ENCODE measurements at regions of chr3 and their contacts with region 1.

Region 1: DNA sequence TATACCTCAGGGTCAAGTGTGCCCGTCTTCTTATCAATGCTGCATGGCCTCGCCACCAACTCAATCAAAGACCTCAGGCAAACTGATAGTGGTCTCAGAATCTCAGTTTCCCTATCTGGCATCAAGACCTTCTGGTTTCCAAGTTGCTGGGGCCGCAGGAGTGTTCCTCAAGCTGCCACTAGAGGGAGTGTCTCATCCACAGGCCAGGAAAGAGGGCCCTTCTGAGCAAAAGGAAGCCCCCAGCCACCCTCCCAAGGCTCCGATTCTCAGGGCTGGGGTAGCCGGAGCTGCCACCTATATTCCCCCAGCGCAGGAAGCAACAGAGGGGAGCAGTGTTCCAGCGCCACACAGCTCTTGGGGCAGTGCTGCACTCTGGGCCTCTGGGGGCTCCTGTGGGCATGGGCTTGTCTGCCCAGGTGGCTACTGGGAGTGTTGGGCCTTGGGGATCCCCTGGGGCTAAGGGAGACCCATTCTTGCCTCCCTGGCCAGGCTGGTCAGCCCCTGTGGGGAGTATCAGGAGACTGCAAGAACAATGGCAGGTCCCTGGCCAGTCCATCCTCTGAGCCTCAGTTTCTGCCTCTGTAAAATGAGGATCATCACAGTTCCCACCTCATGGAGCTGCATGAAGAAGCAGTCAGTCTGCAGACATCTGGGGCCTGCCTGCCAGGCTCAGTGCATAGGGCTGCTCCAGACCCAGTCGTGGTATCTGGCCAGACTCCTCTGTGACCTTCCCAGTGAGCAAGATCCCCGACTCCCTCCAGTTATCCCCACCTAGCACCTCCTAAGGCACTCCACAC is 23.4 kb upstream of the SEC13 start:
- DNase-seq: peak; percentile 74
- H3K4me3 Mint-ChIP-seq: no peak overlapping the region
- H3K27ac Mint-ChIP-seq: no peak overlapping the region
- H3K4me1 Mint-ChIP-seq: no peaks in the 10 kb centered on the region
- H3K27me3 Mint-ChIP-seq: no peaks in the 10 kb centered on the region

Region 2: DNA sequence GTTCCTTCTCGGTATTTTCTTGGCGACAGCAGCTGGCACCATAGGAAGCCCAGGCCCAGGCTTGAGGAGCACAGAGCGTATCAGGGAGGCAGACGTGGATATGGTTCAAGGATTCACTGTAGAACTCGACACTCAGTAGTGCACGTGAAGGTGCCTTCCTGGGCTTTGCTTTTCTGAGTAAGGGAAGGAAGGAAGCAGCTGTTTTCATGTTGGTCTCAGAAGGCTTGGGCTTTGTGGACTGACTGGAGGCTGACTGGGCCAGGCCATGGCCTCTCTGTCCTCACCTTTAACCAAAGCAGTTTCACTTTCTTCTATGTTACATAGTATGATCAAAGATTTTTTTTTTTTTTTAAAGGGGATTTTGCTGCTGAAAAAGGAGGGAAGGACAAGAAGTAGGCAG is 44.7 kb before region 1 on chr3:
- CTCF ChIA-PET with region 1: no interaction called
- intact Hi-C with region 1: no loop called
- DNase-seq: no peak
- H3K4me3 Mint-ChIP-seq: no peak overlapping the region
- H3K27ac Mint-ChIP-seq: peak overlapping the region; percentile 80
- H3K4me1 Mint-ChIP-seq: peaks cover 11% of the 10 kb centered on the region
- H3K27me3 Mint-ChIP-seq: no peaks in the 10 kb centered on the region

Region 3: GRCh38 chr3:10505050-10505790 is 160.9 kb after region 1 on chr3 and contains the start of gene ATP2B2:
- CTCF ChIA-PET with region 1: interaction called, 3 read pairs
- intact Hi-C with region 1: loop called (anchors 10 kb)
- DNase-seq: peak; percentile 19
- H3K4me3 Mint-ChIP-seq: no peak within 1 kb of the TSS
- H3K27ac Mint-ChIP-seq: no peak within 1 kb of the TSS
- H3K4me1 Mint-ChIP-seq: peaks cover 6% of the 10 kb centered on the region
- H3K27me3 Mint-ChIP-seq: peaks cover 13% of the 10 kb centered on the region
- total RNA-seq, gene ATP2B2: not detected

Region 4: DNA sequence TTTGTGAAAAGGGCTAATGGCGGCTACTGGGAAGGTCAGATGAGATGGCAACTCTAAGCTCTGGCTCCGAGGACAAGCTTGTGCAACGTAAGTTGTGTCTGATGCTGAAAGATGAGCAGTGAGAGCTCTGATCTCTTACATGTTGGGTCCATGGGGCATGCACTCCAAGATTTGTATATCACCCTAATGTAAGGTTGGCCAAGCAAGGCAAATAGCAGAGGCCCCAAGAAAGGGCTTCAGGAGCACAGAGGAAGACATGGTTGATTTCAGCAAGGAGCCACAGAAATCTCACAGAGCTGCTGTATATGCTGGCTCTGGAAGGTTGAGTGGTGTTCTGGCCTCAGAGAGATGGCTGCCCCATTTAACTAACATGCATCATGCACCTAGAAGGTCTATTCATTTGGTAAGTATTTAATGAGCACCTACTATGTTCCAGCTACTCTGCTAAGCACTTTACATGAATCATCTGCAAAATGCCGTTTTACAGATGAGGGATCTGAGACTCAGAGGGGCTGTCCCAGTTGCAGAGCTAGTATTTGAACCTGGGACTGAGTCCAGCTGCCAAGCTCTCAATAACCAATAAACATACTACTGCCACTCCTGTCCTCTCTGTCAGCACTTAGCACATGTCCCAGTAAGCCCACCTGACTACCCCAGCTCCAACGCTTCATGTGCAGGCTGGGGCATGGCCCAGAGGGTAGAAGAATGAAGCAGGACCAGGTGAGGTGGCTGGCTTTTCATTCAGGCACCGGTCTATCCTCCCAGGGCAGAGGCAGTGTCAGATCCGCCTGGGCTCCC is 188.8 kb after region 1 on chr3:
- CTCF ChIA-PET with region 1: no interaction called
- intact Hi-C with region 1: no loop called
- DNase-seq: no peak
- H3K4me3 Mint-ChIP-seq: no peak overlapping the region
- H3K27ac Mint-ChIP-seq: no peak overlapping the region
- H3K4me1 Mint-ChIP-seq: no peaks in the 10 kb centered on the region
- H3K27me3 Mint-ChIP-seq: peaks cover 8% of the 10 kb centered on the region

Region 5: DNA sequence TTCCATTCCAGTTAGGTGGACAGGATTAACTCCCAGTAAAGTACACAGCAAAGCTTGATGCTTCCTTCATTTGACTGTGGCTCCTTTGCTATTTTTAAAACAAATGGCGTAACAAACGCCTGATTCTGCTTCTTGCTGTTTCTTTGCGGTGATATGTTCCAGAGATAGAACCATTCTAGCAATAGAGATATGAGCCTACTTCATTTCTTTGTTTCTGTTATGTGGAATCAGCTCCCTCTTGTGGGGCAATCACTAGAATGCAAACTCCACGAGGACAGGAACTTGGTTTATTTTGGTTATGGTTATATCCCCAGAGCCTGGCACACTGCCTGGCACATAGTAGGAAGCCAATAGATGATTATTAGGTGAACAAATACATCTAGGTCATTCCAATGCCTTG is 349.1 kb after region 1 on chr3:
- CTCF ChIA-PET with region 1: no interaction called
- intact Hi-C with region 1: loop called (anchors 1 kb)
- DNase-seq: no peak
- H3K4me3 Mint-ChIP-seq: no peak overlapping the region
- H3K27ac Mint-ChIP-seq: no peak overlapping the region
- H3K4me1 Mint-ChIP-seq: no peaks in the 10 kb centered on the region
- H3K27me3 Mint-ChIP-seq: no peaks in the 10 kb centered on the region

Measured in activated naive CD4-positive, alpha-beta T cell treated with anti-CD3 and anti-CD28 coated beads for 36 hours (primary cell).